ENCODE measurements at regions of chr9 and their contacts with region 1.

Region 1: DNA sequence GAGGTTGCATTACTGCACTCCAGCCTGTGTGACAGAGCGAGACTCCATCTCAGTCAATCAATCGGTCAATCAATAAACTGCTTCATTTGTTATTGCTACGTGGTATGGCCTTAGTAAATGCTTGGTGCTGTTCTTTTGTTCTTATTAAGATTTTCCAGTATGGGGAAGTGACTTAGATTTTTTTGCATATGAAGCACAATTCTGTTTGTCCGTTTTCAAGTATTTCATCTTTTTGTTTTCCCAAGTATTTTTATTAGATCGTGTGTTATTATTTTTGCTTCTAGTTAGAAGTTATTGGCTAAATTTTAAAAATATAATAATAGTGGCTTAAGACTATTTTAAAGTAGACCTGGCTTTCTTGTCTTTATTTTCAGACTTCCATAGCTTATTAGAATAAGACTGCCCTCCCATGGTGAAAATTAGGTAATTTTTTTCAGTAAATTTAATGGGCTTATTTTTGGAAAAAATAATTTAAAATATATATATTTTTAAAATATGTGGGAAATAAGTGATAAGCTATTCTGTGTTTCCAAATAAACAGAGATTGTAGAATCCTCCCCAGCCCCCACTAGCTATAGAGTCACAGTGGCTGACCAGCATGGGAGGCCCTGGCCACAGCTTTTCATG is 14.7 kb upstream of the OMD start:
- DNase-seq: peak; percentile 24
- ATAC-seq: no peak
- H3K4me3 ChIP-seq: no peak overlapping the region
- H3K27ac ChIP-seq: no peak overlapping the region
- H3K4me1 ChIP-seq: peaks cover 8% of the 10 kb centered on the region
- H3K27me3 ChIP-seq: no peaks in the 10 kb centered on the region
- CTCF ChIP-seq: 0 out of 2 replicates have a peak, but pooled peaks have one; percentile 16

Region 2: GRCh38 chr9:92325269-92325990 is 113.6 kb before region 1 on chr9 and contains the starts of genes CENPP and NOL8:
- CTCF ChIA-PET with region 1: interaction called, 10 read pairs
- POLR2A ChIA-PET with region 1: no interaction called
- intact Hi-C with region 1: loop called (anchors 5 kb)
- DNase-seq: peak; percentile 76
- ATAC-seq: peak; percentile 90
- H3K4me3 ChIP-seq: peak within 1 kb of the TSS; percentile 79
- H3K27ac ChIP-seq: peak within 1 kb of the TSS; percentile 91
- H3K4me1 ChIP-seq: peaks cover 10% of the 10 kb centered on the region; the same call in 1 of the 2 replicates
- H3K27me3 ChIP-seq: no peaks in the 10 kb centered on the region
- CTCF ChIP-seq: no peak
- total RNA-seq, gene CENPP: 2.7 and 8.3 TPM in 2 replicates
- total RNA-seq, gene NOL8: 21.0 and 22.5 TPM in 2 replicates

Region 3: GRCh38 chr9:92342825-92343488 is 96.1 kb before region 1 on chr9:
- CTCF ChIA-PET with region 1: interaction called, 6 read pairs
- POLR2A ChIA-PET with region 1: no interaction called
- intact Hi-C with region 1: loop called (anchors 1 kb)
- DNase-seq: peak; percentile 19
- ATAC-seq: peak; percentile 61
- H3K4me3 ChIP-seq: no peak overlapping the region
- H3K27ac ChIP-seq: no peak overlapping the region
- H3K4me1 ChIP-seq: no peaks in the 10 kb centered on the region
- H3K27me3 ChIP-seq: no peaks in the 10 kb centered on the region
- CTCF ChIP-seq: no peak; the same call in 1 of the 2 replicates

Region 4: GRCh38 chr9:92627651-92628050 is 188.6 kb after region 1 on chr9:
- CTCF ChIA-PET with region 1: no interaction called
- POLR2A ChIA-PET with region 1: no interaction called
- intact Hi-C with region 1: no loop called
- DNase-seq: no peak
- ATAC-seq: no peak
- H3K4me3 ChIP-seq: no peak overlapping the region
- H3K27ac ChIP-seq: no peak overlapping the region
- H3K4me1 ChIP-seq: peaks cover 16% of the 10 kb centered on the region
- H3K27me3 ChIP-seq: no peaks in the 10 kb centered on the region
- CTCF ChIP-seq: no peak